Naive thymus-derived CD4-positive, alpha-beta T cell (primary cell): ENCODE measurements at regions of chr3 and their contacts with region 1.

Region 1: DNA sequence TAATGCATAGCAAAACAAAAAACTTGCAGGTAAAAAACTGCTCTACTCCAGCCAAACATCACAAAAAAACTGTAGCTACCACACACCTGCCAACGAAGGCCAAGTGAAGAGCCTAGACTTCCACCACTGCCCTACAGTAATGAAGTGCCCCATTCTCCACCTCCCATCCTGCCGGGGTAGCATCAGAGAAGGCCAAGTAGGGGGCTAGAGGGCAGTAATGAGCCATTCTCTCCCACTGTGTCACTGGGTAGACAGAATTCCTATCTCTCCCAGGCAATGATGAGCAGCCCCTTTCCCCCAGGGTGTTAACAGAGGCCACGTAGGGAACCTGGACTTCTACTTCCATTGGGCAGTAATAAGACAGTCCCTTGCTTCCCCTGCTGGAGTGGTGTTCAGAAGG is 9.5 kb downstream of the SEC22C start:
- DNase-seq: no peak
- ATAC-seq: peak; percentile 77
- H3K4me3 ChIP-seq: no peak overlapping the region
- H3K4me3 Mint-ChIP-seq: no peak overlapping the region
- H3K27ac ChIP-seq: no peak overlapping the region
- H3K27ac Mint-ChIP-seq: peak overlapping the region in 4 of 9 donors; percentile 8 to 29 (median 14)
- H3K4me1 ChIP-seq: peaks cover 0 to 4% of the 10 kb centered on the region in 2 donors
- H3K4me1 Mint-ChIP-seq: peaks cover 8 to 43% (median 33%) of the 10 kb centered on the region in 7 donors
- H3K27me3 ChIP-seq: no peaks in the 10 kb centered on the region
- H3K27me3 Mint-ChIP-seq: no peaks in the 10 kb centered on the region

Region 2: GRCh38 chr3:42613462-42613861 is 41.2 kb after region 1 on chr3:
- CTCF ChIA-PET with region 1: no interaction called
- POLR2A ChIA-PET with region 1: no interaction called
- intact Hi-C with region 1: loop called in 1 of 2 experiments (anchors 1 kb)
- DNase-seq: peak in 1 of 9 donors; percentile 17
- ATAC-seq: peak; percentile 63
- H3K4me3 ChIP-seq: no peak overlapping the region
- H3K4me3 Mint-ChIP-seq: peak overlapping the region in 2 of 10 donors; percentile 1 to 38
- H3K27ac ChIP-seq: no peak overlapping the region
- H3K27ac Mint-ChIP-seq: peak overlapping the region in 5 of 9 donors; percentile 1 to 49 (median 4)
- H3K4me1 ChIP-seq: peaks cover 14 to 15% of the 10 kb centered on the region in 2 donors
- H3K4me1 Mint-ChIP-seq: peaks cover 40 to 84% (median 64%) of the 10 kb centered on the region in 7 donors
- H3K27me3 ChIP-seq: no peaks in the 10 kb centered on the region
- H3K27me3 Mint-ChIP-seq: no peaks in the 10 kb centered on the region

Region 3: GRCh38 chr3:42749753-42750231 is 177.5 kb after region 1 on chr3:
- CTCF ChIA-PET with region 1: interaction called, 4 read pairs
- POLR2A ChIA-PET with region 1: no interaction called
- intact Hi-C with region 1: loop called in 1 of 2 experiments (anchors 1 kb)
- DNase-seq: no peak
- ATAC-seq: peak; percentile 63
- H3K4me3 ChIP-seq: no peak overlapping the region
- H3K4me3 Mint-ChIP-seq: peak overlapping the region in 1 of 10 donors; percentile 12
- H3K27ac ChIP-seq: no peak overlapping the region
- H3K27ac Mint-ChIP-seq: peak overlapping the region in 4 of 9 donors; percentile 17 to 65 (median 36)
- H3K4me1 ChIP-seq: peaks cover 15 to 38% of the 10 kb centered on the region in 2 donors
- H3K4me1 Mint-ChIP-seq: peaks cover 16 to 40% (median 31%) of the 10 kb centered on the region in 7 donors
- H3K27me3 ChIP-seq: no peaks in the 10 kb centered on the region
- H3K27me3 Mint-ChIP-seq: no peaks in the 10 kb centered on the region

Region 4: GRCh38 chr3:42839616-42840015 is 267.3 kb after region 1 on chr3:
- CTCF ChIA-PET with region 1: no interaction called
- POLR2A ChIA-PET with region 1: no interaction called
- intact Hi-C with region 1: loop called in 1 of 2 experiments (anchors 1 kb)
- DNase-seq: peak in 7 of 9 donors; percentile 19 to 58 (median 51)
- ATAC-seq: peak; percentile 96
- H3K4me3 ChIP-seq: no peak overlapping the region
- H3K4me3 Mint-ChIP-seq: no peak overlapping the region
- H3K27ac ChIP-seq: no peak overlapping the region
- H3K27ac Mint-ChIP-seq: no peak overlapping the region
- H3K4me1 ChIP-seq: no peaks in the 10 kb centered on the region
- H3K4me1 Mint-ChIP-seq: peaks cover 0 to 4% (median 0%) of the 10 kb centered on the region in 7 donors
- H3K27me3 ChIP-seq: no peaks in the 10 kb centered on the region
- H3K27me3 Mint-ChIP-seq: peaks cover 0 to 5% (median 3%) of the 10 kb centered on the region in 5 donors